ENCODE measurements at regions of chr17 and their contacts with region 1.

Region 1: GRCh38 chr17:17959520-17960361 is 12.5 kb downstream of the TOM1L2 start:
- DNase-seq: peak; percentile 60
- H3K4me3 Mint-ChIP-seq: peak overlapping the region; percentile 74
- H3K27ac Mint-ChIP-seq: peak overlapping the region; percentile 96
- H3K4me1 Mint-ChIP-seq: peaks cover 72% of the 10 kb centered on the region
- H3K27me3 Mint-ChIP-seq: no peaks in the 10 kb centered on the region

Region 2: GRCh38 chr17:17849845-17850373 is 109.8 kb before region 1 on chr17:
- CTCF ChIA-PET with region 1: no interaction called
- intact Hi-C with region 1: loop called (anchors 1 kb)
- DNase-seq: peak; percentile 94
- H3K4me3 Mint-ChIP-seq: peak overlapping the region; percentile 41
- H3K27ac Mint-ChIP-seq: peak overlapping the region; percentile 95
- H3K4me1 Mint-ChIP-seq: peaks cover 78% of the 10 kb centered on the region
- H3K27me3 Mint-ChIP-seq: no peaks in the 10 kb centered on the region

Region 3: DNA sequence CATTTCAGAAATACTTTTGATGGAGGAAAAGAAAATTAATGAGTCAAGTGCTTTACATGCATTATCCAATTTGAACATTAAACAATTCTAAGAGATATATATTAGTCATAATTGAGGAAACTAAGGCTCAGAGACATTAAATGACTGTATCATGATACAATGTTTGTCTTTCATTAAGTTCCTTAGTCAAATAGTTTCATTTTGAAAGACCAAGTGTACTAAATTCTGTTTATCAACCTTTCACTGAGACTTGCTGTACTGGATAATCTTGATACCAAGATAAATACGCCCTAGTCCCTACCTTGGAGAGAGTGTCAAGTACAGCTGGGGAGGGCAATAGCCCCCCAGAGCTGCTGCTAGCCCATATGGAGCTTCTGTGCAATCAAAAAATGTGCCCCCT is 11.8 kb before region 1 on chr17:
- CTCF ChIA-PET with region 1: interaction called, 8 read pairs
- intact Hi-C with region 1: loop called (anchors 1 kb)
- DNase-seq: no peak
- H3K4me3 Mint-ChIP-seq: no peak overlapping the region
- H3K27ac Mint-ChIP-seq: peak overlapping the region; percentile 50
- H3K4me1 Mint-ChIP-seq: peaks cover 28% of the 10 kb centered on the region
- H3K27me3 Mint-ChIP-seq: no peaks in the 10 kb centered on the region

Region 4: GRCh38 chr17:17972126-17972951 is 12.6 kb after region 1 on chr17 and contains the starts of genes DRC3 and TOM1L2:
- CTCF ChIA-PET with region 1: no interaction called
- intact Hi-C with region 1: loop called (anchors 1 kb)
- DNase-seq: peak; percentile 100
- H3K4me3 Mint-ChIP-seq: peak within 1 kb of the TSS; percentile 90
- H3K27ac Mint-ChIP-seq: peak within 1 kb of the TSS; percentile 75
- H3K4me1 Mint-ChIP-seq: peaks cover 35% of the 10 kb centered on the region
- H3K27me3 Mint-ChIP-seq: no peaks in the 10 kb centered on the region
- total RNA-seq, gene DRC3: 0.40 to 0.64 TPM
- total RNA-seq, gene TOM1L2: 9.8 to 9.9 TPM

Region 5: GRCh38 chr17:18038861-18039534 is 79.3 kb after region 1 on chr17 and contains the starts of genes ATPAF2 and GID4:
- CTCF ChIA-PET with region 1: interaction called, 4 read pairs
- intact Hi-C with region 1: loop called (anchors 1 kb)
- DNase-seq: peak; percentile 100
- H3K4me3 Mint-ChIP-seq: peak within 1 kb of the TSS; percentile 86
- H3K27ac Mint-ChIP-seq: peak within 1 kb of the TSS; percentile 79
- H3K4me1 Mint-ChIP-seq: peaks cover 40% of the 10 kb centered on the region
- H3K27me3 Mint-ChIP-seq: no peaks in the 10 kb centered on the region
- total RNA-seq, gene ATPAF2: 24.7 to 25.7 TPM
- total RNA-seq, gene GID4: 5.2 to 6.0 TPM

Region 6: DNA sequence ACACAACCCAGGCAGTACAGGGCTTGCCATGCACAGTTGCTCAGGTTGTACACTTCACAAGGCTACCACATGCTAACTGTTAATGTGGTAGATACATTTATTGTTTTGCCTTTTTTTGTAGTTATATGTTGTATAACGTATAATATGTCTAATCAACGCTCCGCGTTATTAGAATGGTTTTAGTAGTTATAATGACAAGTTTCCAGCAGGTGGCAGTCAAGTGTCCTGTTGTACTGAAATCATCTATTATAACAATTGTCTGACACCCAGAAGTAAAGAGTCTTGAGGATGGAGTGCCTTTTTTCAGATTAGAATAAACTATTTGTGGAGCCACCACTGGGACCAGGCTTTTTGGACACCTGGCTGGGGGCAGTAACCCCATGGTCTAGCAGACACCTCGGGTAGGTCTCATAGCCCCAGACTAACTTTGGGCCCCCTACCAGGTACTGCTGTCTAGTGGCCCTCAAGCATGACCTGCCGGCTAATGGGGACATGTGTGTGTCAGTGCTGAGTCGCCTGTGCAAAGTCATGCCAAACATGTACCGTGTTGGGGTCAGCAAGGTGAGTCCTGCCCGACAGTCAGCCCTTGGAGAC is 181.6 kb after region 1 on chr17:
- CTCF ChIA-PET with region 1: no interaction called
- intact Hi-C with region 1: no loop called
- DNase-seq: peak; percentile 64
- H3K4me3 Mint-ChIP-seq: no peak overlapping the region
- H3K27ac Mint-ChIP-seq: no peak overlapping the region
- H3K4me1 Mint-ChIP-seq: no peaks in the 10 kb centered on the region
- H3K27me3 Mint-ChIP-seq: no peaks in the 10 kb centered on the region

Region 7: GRCh38 chr17:18248300-18248731 is 288.6 kb after region 1 on chr17:
- CTCF ChIA-PET with region 1: no interaction called
- intact Hi-C with region 1: no loop called
- DNase-seq: peak; percentile 83
- H3K4me3 Mint-ChIP-seq: no peak overlapping the region
- H3K27ac Mint-ChIP-seq: peak overlapping the region; percentile 28
- H3K4me1 Mint-ChIP-seq: no peaks in the 10 kb centered on the region
- H3K27me3 Mint-ChIP-seq: no peaks in the 10 kb centered on the region